SK-N-SH (cell line): ENCODE measurements at regions of chr3 and their contacts with region 1.

Region 1: DNA sequence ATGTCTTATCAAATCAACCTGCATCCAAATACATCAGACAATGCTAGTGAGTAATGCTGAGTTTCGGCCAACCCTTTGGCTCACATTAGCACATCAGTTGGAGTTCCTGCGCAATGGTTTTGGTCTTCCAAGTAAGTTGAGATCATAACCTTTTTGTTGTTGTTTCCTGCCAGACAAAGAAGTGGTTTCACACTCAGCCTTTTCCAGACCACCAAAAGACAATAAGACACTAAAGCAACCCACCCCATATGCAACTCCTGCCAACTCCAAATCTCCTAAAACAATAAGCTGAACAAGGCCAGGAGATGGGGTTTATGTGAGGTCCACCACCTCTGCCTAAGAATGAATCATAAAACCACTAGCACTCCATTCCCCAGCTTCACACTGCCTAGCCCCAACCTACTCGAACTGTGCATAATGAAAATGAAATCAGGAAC is 177.0 kb downstream of the ERC2 start:
- DNase-seq: no peak
- H3K4me3 ChIP-seq: no peak overlapping the region
- H3K27ac ChIP-seq: no peak overlapping the region
- H3K4me1 ChIP-seq: no peaks in the 10 kb centered on the region
- H3K27me3 ChIP-seq: no peaks in the 10 kb centered on the region
- CTCF ChIP-seq: no peak
- EP300 ChIP-seq: no peak
- RAD21 ChIP-seq: no peak

Region 2: GRCh38 chr3:56303487-56303886 is 12.2 kb after region 1 on chr3:
- CTCF ChIA-PET with region 1: interaction called, 24 read pairs
- POLR2A ChIA-PET with region 1: no interaction called
- DNase-seq: peak; percentile 54
- H3K4me3 ChIP-seq: peak overlapping the region in 1 of 2 experiments; percentile 20; a peak in 1 of 4 replicates
- H3K27ac ChIP-seq: no peak overlapping the region
- H3K4me1 ChIP-seq: peaks cover 0 to 4% of the 10 kb centered on the region in 2 experiments; a peak in 2 of 4 replicates
- H3K27me3 ChIP-seq: no peaks in the 10 kb centered on the region
- CTCF ChIP-seq: peak; percentile 62
- EP300 ChIP-seq: no peak
- RAD21 ChIP-seq: peak; percentile 74